GM10248 (cell line): ENCODE measurements at regions of chr9 and their contacts with region 1.

Region 1: GRCh38 chr9:98807070-98807810 is at the start of gene GALNT12:
- DNase-seq: peak; percentile 73
- CTCF ChIP-seq: peak; percentile 29

Region 2: GRCh38 chr9:98791147-98792095 is 15.8 kb before region 1 on chr9:
- CTCF ChIA-PET with region 1: interaction called, 10 read pairs
- POLR2A ChIA-PET with region 1: no interaction called
- DNase-seq: peak; percentile 81
- CTCF ChIP-seq: peak; percentile 94

Region 3: DNA sequence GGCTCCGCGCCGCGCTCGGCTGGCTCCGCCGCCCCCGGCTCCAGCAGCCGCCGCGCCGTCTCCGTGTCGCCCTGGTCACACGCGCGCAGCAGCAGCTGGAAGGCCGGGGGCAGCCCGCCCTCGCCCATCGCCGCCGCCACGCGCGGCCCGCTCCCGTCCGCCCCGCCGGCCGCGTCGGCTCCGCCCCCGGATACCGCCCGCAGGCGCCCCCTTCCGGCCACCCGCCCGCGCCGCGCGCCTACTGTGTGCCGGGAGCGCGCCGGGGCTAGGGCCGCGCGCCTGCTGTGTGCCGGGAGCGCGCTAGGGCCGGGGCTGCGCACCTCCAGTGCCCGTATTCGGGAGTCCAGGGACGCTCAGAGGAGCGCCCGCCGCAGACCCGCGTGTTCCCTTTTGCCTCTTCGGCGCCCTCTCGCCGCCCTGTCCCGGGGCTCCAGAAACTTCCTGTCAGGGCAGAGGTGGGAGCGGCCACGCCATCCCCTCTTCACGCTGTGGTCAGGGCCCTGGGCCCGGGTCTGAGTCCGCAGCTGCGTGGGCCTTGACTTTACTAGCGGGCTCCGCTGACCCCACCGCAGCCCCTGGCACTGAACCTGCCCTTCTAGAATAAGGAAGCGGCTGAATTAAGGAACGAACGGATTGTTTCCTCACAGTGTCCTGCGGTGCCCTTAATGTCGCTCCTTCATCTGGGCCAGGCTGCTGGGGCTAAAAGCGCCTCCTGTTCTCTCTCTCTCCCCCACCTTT is 10.7 kb before region 1 on chr9 and contains the start of gene ANKS6:
- CTCF ChIA-PET with region 1: interaction called, 15 read pairs
- POLR2A ChIA-PET with region 1: no interaction called
- DNase-seq: peak; percentile 88
- CTCF ChIP-seq: peak; percentile 80